Endothelial cell of umbilical vein (primary cell): ENCODE measurements at regions of chr5 and their contacts with region 1.

Region 1: GRCh38 chr5:132238169-132238744 is 10.6 kb upstream of the P4HA2 start:
- DNase-seq: peak; percentile 69
- H3K4me3 ChIP-seq: no peak overlapping the region
- H3K27ac ChIP-seq: no peak overlapping the region
- H3K4me1 ChIP-seq: no peaks in the 10 kb centered on the region
- H3K27me3 ChIP-seq: no peaks in the 10 kb centered on the region
- CTCF ChIP-seq: peak; percentile 71 to 84
- POLR2A ChIP-seq: no peak

Region 2: GRCh38 chr5:132180134-132180745 is 58.0 kb before region 1 on chr5:
- CTCF ChIA-PET with region 1: interaction called, 15 read pairs
- POLR2A ChIA-PET with region 1: no interaction called
- dilution Hi-C with region 1: no loop called
- intact Hi-C with region 1: no loop called
- DNase-seq: peak; percentile 78
- H3K4me3 ChIP-seq: no peak overlapping the region
- H3K27ac ChIP-seq: no peak overlapping the region
- H3K4me1 ChIP-seq: peaks cover 16% of the 10 kb centered on the region
- H3K27me3 ChIP-seq: no peaks in the 10 kb centered on the region
- CTCF ChIP-seq: peak; percentile 70 to 74
- POLR2A ChIP-seq: no peak

Region 3: GRCh38 chr5:132205385-132206125 is 32.7 kb before region 1 on chr5:
- CTCF ChIA-PET with region 1: interaction called, 14 read pairs
- POLR2A ChIA-PET with region 1: no interaction called
- dilution Hi-C with region 1: no loop called
- intact Hi-C with region 1: no loop called
- DNase-seq: peak; percentile 53
- H3K4me3 ChIP-seq: no peak overlapping the region
- H3K27ac ChIP-seq: no peak overlapping the region
- H3K4me1 ChIP-seq: no peaks in the 10 kb centered on the region
- H3K27me3 ChIP-seq: no peaks in the 10 kb centered on the region
- CTCF ChIP-seq: no peak
- POLR2A ChIP-seq: no peak

Region 4: GRCh38 chr5:132227485-132228240 is 10.6 kb before region 1 on chr5 and contains the start of gene P4HA2:
- CTCF ChIA-PET with region 1: interaction called, 39 read pairs
- POLR2A ChIA-PET with region 1: no interaction called
- dilution Hi-C with region 1: no loop called
- intact Hi-C with region 1: no loop called
- DNase-seq: peak; percentile 71
- H3K4me3 ChIP-seq: peak within 1 kb of the TSS; percentile 44 to 61 (median 46)
- H3K27ac ChIP-seq: peak within 1 kb of the TSS; percentile 28
- H3K4me1 ChIP-seq: no peaks in the 10 kb centered on the region
- H3K27me3 ChIP-seq: peaks cover 0 to 1% of the 10 kb centered on the region in 2 experiments
- CTCF ChIP-seq: no peak
- POLR2A ChIP-seq: peak; percentile 56
- total RNA-seq, gene P4HA2: 37.4 and 37.6 TPM in 2 replicates

Region 5: DNA sequence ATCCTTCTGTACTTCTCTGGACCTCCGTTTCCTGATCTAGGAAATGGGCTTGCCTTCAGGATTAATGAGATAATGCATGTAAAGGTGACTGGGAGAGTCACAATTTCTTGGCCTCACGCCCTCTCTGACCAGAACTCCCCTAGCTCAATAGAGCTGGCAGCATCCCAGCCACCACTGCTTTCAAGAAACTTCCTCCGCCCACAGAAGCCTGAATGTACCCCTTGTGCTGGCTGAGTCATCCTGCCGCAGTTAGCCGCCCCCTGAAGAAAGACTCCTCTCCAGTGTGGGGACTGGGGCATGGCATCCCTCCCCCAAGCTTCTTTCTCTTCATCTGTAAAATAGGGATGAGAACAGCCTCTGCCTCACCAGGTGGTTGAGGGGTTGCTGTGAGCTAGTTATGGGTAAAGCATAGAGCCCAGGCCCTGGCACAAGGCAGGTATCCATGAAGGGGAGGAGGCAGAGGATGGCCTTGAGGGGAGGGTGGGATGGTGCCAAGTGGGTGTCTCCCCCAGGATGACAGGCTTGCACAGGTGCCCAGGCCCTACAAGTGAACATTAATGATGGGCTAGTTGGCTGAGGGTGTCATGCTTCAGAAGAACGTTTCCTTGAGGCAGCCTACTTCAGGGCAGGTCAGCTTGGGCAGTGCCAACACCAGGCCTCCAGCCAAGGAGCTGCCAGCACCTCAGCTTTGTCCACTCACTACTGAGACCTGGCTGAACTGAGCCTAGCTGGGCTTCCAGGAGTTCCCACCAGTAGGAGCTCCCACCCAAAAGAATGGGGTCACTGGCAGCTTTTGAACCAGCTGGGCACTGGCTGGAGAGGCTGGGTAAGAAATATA is 22.7 kb after region 1 on chr5:
- CTCF ChIA-PET with region 1: interaction called, 93 read pairs
- POLR2A ChIA-PET with region 1: no interaction called
- dilution Hi-C with region 1: no loop called
- intact Hi-C with region 1: loop called (anchors 1 kb)
- DNase-seq: peak; percentile 91
- H3K4me3 ChIP-seq: no peak overlapping the region
- H3K27ac ChIP-seq: peak overlapping the region; percentile 96
- H3K4me1 ChIP-seq: peaks cover 76% of the 10 kb centered on the region
- H3K27me3 ChIP-seq: no peaks in the 10 kb centered on the region
- CTCF ChIP-seq: no peak
- POLR2A ChIP-seq: no peak

Region 6: GRCh38 chr5:132283423-132284043 is 45.3 kb after region 1 on chr5:
- CTCF ChIA-PET with region 1: interaction called, 21 read pairs
- POLR2A ChIA-PET with region 1: no interaction called
- dilution Hi-C with region 1: no loop called
- intact Hi-C with region 1: loop called (anchors 1 kb)
- DNase-seq: peak; percentile 62
- H3K4me3 ChIP-seq: no peak overlapping the region
- H3K27ac ChIP-seq: no peak overlapping the region
- H3K4me1 ChIP-seq: no peaks in the 10 kb centered on the region
- H3K27me3 ChIP-seq: peaks cover 0 to 2% of the 10 kb centered on the region in 2 experiments
- CTCF ChIP-seq: peak; percentile 69 to 71
- POLR2A ChIP-seq: no peak

Region 7: DNA sequence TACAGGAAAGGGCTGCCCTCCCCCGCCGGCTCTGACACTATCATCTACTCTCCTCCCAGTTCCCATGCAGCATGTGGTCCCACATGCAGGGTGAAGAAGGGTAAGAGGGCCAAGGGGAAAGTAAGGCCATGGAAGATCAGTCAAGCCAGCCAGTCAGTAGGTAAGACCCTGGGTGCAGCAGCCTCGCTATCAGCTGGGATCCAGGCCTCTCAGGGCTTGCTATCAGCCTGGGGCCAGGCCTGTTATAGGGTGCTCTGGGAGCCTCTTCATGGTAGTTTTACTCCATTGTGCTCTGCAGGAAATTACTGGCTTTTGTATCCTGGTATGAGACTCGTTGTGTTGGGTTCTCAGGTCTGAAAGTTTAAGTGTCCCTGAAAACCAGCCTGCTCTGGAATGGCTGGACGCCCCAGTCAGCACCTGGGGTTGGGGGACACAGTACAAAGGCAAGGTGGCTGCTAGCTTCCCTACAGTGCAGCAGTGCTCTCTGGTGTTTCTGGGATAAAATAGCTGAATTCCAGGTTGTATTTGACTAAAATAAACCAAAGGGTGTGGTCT is 77.3 kb after region 1 on chr5:
- CTCF ChIA-PET with region 1: interaction called, 14 read pairs
- POLR2A ChIA-PET with region 1: no interaction called
- dilution Hi-C with region 1: no loop called
- intact Hi-C with region 1: no loop called
- DNase-seq: no peak
- H3K4me3 ChIP-seq: no peak overlapping the region
- H3K27ac ChIP-seq: no peak overlapping the region
- H3K4me1 ChIP-seq: no peaks in the 10 kb centered on the region
- H3K27me3 ChIP-seq: no peaks in the 10 kb centered on the region
- CTCF ChIP-seq: no peak
- POLR2A ChIP-seq: no peak

Region 8: GRCh38 chr5:132342291-132343180 is 104.3 kb after region 1 on chr5:
- CTCF ChIA-PET with region 1: no interaction called
- POLR2A ChIA-PET with region 1: no interaction called
- dilution Hi-C with region 1: no loop called
- intact Hi-C with region 1: no loop called
- DNase-seq: no peak
- H3K4me3 ChIP-seq: no peak overlapping the region
- H3K27ac ChIP-seq: no peak overlapping the region
- H3K4me1 ChIP-seq: no peaks in the 10 kb centered on the region
- H3K27me3 ChIP-seq: no peaks in the 10 kb centered on the region
- CTCF ChIP-seq: no peak
- POLR2A ChIP-seq: no peak